Activated naive CD4-positive, alpha-beta T cell treated with anti-CD3 and anti-CD28 coated beads for 36 hours (primary cell): ENCODE measurements at regions of chr13 and their contacts with region 1.

Region 1: DNA sequence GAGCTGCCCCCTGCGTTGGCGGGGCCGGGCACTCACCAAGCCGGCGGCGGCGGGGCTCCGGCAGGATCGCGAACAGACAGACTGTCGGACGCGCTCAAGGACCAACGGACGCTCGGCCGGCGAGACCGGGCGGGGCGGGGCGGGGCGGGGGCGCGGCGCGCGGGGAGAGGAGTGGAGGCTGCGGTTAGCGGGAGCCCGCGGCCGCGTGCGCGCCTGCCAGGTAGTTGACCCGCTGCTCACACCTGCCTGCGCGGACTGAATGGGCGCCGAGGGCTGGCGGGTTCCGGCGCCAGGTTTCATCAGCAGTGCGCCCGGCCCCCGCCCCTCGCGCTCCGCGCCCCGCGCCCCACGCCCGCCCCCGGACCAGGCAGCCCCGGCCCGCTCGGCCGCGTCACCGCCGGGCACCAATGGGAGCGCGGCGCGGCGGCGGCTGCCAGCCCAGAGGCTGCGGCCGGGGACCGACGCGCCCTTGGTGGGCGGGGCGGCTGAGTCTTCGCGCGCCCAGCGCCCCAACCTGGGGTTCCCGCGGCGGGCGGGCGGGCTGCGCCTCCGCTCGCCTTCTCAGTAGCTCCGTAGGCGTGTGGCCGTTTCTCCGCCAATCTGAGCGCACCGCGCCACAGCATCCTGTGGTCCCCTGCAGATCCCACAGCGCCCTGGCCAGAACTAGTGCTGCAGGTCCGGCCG is at the start of gene SLC7A1:
- DNase-seq: peak; percentile 84
- H3K4me3 Mint-ChIP-seq: peak within 1 kb of the TSS; percentile 90
- H3K27ac Mint-ChIP-seq: peak within 1 kb of the TSS; percentile 95
- H3K4me1 Mint-ChIP-seq: peaks cover 39% of the 10 kb centered on the region
- H3K27me3 Mint-ChIP-seq: no peaks in the 10 kb centered on the region
- total RNA-seq, gene SLC7A1: 115 to 119 TPM

Region 2: DNA sequence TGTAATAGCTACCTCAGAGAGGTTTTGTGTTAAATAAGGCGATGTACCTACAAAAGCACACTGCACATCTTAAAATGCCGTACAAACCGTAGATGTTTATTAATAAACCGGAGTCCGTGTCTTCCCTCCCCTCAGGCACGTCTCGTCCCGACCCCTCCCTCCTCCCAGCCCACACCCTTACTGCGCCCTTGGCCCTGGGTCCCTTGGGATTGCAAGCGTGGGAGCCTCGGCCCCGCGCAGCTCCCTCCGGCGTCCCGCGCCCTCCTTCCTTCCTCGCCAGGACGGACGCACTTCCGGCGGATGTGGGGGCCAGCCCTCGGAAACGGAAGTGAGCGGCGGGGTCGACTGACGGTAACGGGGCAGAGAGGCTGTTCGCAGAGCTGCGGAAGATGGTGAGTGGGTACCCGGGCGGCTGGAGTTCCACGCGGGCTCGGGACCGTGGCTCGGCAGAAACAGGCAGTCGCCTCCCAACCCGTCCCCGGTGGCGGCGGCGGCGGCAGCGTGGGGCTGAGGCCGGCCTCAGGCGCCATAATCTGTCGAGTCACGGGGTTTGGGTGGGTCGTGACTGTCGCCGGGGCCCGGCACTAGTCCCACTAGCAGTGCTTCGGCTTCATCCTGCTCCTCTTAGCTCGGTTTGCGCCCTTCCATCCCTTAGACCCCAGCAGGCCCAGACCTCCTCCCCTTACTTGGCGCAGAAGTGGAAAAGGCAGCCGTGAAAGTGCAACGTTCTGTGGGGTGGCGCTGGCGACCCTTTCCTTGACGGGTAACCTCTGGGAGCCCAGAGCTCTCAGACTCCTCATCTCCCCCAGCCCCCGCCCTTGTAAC is 936.5 kb before region 1 on chr13 and contains the start of gene POMP:
- CTCF ChIA-PET with region 1: no interaction called
- intact Hi-C with region 1: loop called (anchors 10 kb)
- DNase-seq: peak; percentile 95
- H3K4me3 Mint-ChIP-seq: peak within 1 kb of the TSS; percentile 97
- H3K27ac Mint-ChIP-seq: peak within 1 kb of the TSS; percentile 98
- H3K4me1 Mint-ChIP-seq: peaks cover 56% of the 10 kb centered on the region
- H3K27me3 Mint-ChIP-seq: no peaks in the 10 kb centered on the region
- total RNA-seq, gene POMP: 106 to 108 TPM

Region 3: DNA sequence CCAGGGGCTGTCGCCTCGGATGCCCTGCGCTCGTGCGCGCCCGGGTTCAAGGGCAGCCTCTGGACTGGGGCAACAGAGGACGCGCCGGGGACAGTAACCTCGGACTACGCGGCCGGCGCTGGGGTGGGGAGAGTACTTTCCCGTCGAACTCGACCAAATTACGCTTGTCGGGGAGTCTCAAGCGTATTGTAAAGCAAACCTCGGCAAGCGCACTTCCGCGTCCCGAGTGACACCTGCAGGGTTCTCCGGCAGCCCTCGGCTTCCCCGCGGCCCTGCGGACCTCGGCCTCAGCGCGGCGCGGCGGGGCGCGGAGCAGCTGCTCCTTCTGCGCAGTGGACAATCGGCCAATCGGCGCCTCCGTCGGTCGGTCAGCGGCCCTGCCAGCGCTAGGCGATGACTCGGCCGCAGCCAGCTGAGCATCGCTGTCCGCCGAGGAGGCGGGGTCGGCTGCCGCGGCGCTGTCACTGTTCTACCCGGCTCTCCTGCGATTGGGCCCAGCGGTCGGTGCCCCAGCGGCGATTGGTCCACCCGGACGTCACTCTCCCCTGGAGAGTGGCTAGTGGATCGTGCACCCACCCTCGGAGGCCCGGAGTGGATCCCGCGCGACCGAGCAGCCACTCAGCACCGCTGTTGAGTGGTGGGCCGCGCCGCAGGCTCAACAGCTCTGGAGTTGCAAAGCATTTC is 876.8 kb before region 1 on chr13 and contains the start of gene SLC46A3:
- CTCF ChIA-PET with region 1: no interaction called
- intact Hi-C with region 1: loop called (anchors 10 kb)
- DNase-seq: peak; percentile 98
- H3K4me3 Mint-ChIP-seq: peak within 1 kb of the TSS; percentile 94
- H3K27ac Mint-ChIP-seq: peak within 1 kb of the TSS; percentile 86
- H3K4me1 Mint-ChIP-seq: peaks cover 22% of the 10 kb centered on the region
- H3K27me3 Mint-ChIP-seq: no peaks in the 10 kb centered on the region
- total RNA-seq, gene SLC46A3: 2.2 to 3.2 TPM

Region 4: DNA sequence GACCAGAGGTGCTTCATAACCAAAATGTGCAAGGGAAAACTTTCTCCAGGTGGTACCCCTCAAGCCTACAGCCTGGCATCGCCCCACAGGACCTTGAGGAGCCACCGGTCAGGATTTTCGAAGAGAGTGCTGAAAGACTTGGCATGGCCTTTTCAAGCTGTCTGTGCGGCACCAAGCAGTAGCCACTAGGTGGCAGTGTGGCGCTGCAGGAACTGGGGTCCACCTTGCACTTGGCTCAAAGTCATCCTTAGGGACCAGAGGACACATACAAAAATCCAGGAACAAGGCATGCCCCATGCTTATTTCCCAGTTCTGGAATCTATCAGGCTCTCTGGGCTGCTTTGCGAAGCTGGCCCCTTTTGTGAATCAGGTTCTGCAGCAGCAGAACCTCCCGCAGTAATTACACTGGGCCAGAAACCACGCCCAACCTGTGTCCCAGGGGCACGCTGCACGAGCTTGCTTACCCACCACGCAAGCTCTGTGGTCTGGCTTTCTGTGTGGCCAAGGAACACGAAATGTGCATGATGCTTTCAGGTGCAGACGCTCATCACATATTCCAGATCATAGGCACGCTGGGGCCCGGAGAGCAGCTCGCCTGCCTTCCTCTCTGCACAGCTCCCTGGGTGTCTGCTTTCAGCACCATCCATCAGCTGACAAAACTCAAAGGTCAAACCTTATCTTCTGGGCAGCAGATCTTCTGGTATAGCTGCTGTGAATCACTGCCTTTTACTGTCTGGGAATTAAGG is 87.2 kb before region 1 on chr13:
- CTCF ChIA-PET with region 1: interaction called, 4 read pairs
- intact Hi-C with region 1: loop called (anchors 1 kb)
- DNase-seq: peak; percentile 84
- H3K4me3 Mint-ChIP-seq: no peak overlapping the region
- H3K27ac Mint-ChIP-seq: peak overlapping the region; percentile 3
- H3K4me1 Mint-ChIP-seq: peaks cover 3% of the 10 kb centered on the region
- H3K27me3 Mint-ChIP-seq: peaks cover 3% of the 10 kb centered on the region

Region 5: GRCh38 chr13:29543230-29544215 is 52.0 kb before region 1 on chr13:
- CTCF ChIA-PET with region 1: no interaction called
- intact Hi-C with region 1: loop called (anchors 1 kb)
- DNase-seq: peak; percentile 74
- H3K4me3 Mint-ChIP-seq: no peak overlapping the region
- H3K27ac Mint-ChIP-seq: peak overlapping the region; percentile 41
- H3K4me1 Mint-ChIP-seq: peaks cover 55% of the 10 kb centered on the region
- H3K27me3 Mint-ChIP-seq: no peaks in the 10 kb centered on the region

Region 6: DNA sequence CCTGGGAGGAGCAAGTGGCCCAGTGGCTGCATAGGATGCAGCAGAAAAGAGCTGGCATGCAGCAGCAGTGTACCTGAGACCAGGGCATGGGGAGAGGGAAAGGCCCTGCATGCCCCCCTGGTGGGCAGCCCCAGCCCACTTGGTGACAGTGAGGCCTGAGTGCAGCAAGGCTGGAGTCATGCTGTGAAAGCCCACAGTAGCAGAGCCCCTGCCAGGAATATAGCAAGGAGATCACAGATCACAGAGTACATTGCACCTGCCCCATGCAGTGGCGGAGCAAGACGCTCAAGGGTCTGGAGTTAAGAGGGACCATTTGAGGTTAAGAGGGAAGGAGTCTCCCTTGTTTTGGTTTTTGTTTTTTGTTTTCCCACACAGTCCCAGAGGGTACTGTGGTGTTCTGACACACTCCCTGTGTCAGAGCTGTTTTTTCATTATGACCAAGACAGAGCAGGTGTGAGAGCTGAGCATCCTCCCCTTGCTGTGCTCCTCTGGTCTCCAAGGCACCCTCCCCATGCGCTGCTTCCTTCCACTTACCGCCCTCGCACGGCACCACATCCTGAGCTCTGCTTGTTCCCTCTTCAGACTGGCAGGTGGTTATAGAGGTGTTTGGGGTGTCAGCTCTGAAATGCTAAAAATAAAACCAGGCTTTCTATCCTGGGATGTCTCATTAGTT is 339.9 kb after region 1 on chr13:
- CTCF ChIA-PET with region 1: no interaction called
- intact Hi-C with region 1: loop called (anchors 10 kb)
- DNase-seq: peak; percentile 94
- H3K4me3 Mint-ChIP-seq: peak overlapping the region; percentile 67
- H3K27ac Mint-ChIP-seq: peak overlapping the region; percentile 83
- H3K4me1 Mint-ChIP-seq: peaks cover 39% of the 10 kb centered on the region
- H3K27me3 Mint-ChIP-seq: no peaks in the 10 kb centered on the region

Region 7: GRCh38 chr13:31199849-31200636 is 1604.5 kb after region 1 on chr13 and contains the start of gene B3GLCT:
- CTCF ChIA-PET with region 1: no interaction called
- intact Hi-C with region 1: loop called (anchors 10 kb)
- DNase-seq: peak; percentile 65
- H3K4me3 Mint-ChIP-seq: peak within 1 kb of the TSS; percentile 83
- H3K27ac Mint-ChIP-seq: peak within 1 kb of the TSS; percentile 68
- H3K4me1 Mint-ChIP-seq: peaks cover 26% of the 10 kb centered on the region
- H3K27me3 Mint-ChIP-seq: no peaks in the 10 kb centered on the region
- total RNA-seq, gene B3GLCT: 1.2 to 1.5 TPM